ENCODE measurements at regions of chr2 and their contacts with region 1.

Region 1: DNA sequence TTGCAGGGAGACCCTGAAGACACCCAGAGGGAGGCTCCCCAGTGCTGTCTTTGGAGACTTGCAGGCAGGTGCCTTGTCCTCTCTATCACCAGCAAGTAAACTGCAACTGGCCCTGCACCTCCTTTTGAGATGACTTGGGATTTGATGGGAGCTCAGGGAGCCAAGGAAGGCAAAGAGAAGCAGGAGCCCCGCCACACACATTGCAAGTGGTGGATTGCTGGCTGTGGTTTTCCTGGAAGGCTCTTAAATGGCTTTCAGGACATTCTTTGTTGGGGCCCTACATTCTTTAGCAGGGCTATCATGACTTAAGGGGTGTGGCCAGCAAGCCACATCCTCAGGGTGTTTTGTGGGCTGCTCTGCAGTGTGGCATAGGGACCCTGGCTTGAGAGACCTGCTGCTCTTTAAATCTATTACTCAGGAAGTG is 39.9 kb upstream of the CDC42EP3 start:
- DNase-seq: peak; percentile 78
- H3K4me3 ChIP-seq: no peak overlapping the region
- H3K27me3 ChIP-seq: no peaks in the 10 kb centered on the region
- CTCF ChIP-seq: no peak

Region 2: DNA sequence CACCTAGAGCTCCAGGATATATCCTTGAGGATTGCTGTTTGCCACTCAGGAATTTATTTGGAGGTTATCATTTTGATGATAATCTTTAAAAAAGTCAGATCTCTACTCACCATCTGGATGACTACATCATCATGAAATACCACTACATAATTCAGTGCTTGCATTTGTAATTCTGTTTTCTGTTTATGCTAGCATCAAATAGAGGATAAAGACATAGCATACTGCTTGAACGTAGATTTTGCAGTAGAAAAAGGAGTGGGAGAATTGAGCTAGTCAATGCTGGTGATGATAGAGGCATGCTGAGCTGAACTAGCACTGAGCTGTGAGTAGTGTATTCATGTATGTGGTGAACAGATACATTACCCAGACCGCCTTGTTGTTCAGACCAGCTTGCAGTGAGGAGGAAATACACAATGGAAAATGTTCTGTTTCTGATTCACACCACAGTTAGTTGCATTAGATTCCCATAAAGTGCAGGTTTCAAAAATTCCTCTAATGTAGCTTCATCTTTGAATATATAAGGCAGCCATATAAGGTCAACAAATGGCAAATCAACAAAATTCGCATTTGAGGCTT is 28.9 kb after region 1 on chr2:
- CTCF ChIA-PET with region 1: no interaction called
- POLR2A ChIA-PET with region 1: interaction called, 16 read pairs
- DNase-seq: no peak
- H3K4me3 ChIP-seq: no peak overlapping the region
- H3K27me3 ChIP-seq: no peaks in the 10 kb centered on the region
- CTCF ChIP-seq: no peak